MCF 10A (cell line): ENCODE measurements at regions of chr19 and their contacts with region 1.

Region 1: DNA sequence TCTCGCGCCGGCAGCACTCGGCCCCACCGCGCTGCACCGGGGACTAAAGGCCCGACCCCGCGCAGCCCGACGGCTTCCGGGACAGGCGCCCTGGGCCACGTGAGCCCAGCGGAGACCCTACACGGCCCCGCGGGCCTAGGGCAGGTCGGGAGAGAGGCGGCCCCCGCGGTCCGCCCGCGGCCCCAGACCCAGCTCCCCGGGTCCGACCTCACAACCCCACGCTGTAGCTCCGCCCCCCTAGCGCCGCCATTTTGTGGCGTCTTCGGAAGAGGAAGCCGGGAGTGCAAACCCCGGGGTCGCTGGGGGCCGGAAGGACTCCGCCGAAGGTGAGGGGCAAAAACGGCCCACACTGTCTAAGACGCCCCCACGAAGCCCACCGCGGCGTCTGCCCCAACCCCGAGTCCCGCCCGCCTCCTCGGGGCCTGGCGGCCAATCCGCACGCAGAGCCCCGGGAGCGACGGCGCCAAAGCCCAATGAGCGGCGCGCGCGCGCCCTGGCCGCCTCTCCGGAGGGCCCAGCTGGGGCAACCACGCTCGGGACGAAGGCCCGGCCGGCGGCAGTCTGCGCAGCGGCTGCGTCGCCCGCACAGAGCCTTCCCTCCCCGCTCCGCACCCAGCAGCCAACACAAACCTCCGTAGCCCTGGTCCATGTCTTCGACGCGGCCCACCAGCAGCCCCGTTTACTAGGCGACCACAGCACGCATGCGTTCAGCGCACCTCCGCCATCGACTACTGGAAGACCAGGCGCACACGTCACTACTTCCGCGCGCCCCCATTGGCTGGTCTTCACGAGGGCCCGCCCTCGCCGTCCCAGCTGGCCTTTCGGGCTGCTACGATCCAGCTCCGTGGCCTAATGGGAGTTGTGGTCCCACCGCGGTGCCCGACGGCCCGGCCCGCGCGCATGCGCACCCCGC is at the start of gene AKAP8:
- DNase-seq: peak; percentile 99
- H3K4me3 Mint-ChIP-seq: peak within 1 kb of the TSS; percentile 97
- H3K27ac Mint-ChIP-seq: peak within 1 kb of the TSS; percentile 94
- H3K4me1 Mint-ChIP-seq: peaks cover 21% of the 10 kb centered on the region
- H3K27me3 Mint-ChIP-seq: no peaks in the 10 kb centered on the region
- CTCF ChIP-seq: no peak
- total RNA-seq, gene AKAP8: 31.1 and 37.8 TPM in 2 replicates

Region 2: DNA sequence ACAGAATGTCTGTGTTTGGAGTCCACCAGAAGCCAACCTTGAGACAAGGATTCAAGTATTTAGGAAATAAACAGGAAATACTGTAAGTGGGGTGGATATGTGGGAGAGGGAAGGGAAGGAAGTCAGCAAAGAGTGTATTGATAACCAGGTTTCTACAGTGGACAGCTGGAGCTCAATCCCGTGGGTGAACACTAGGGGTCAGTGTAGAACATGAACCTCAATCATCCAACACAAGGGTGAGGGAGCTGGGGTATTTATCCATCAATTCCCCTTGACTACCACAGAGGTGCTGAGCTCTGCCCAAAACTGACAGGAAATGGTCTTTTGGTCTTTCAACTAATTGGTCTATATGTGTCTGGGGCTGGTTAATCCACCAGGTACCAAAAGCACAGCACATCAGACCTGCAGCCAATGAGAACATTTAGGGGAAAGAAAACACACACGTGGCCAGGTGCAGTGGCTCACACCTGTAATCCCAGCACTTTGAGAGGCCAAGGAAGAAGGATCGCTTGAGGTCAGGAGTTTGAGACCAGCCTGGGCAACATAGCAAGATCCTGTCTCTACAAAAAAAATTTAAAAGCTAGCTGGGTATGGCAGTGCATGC is 277.8 kb before region 1 on chr19:
- CTCF ChIA-PET with region 1: no interaction called
- POLR2A ChIA-PET with region 1: no interaction called
- intact Hi-C with region 1: no loop called
- DNase-seq: peak; percentile 45
- H3K4me3 Mint-ChIP-seq: no peak overlapping the region
- H3K27ac Mint-ChIP-seq: no peak overlapping the region
- H3K4me1 Mint-ChIP-seq: peaks cover 5% of the 10 kb centered on the region
- H3K27me3 Mint-ChIP-seq: no peaks in the 10 kb centered on the region
- CTCF ChIP-seq: peak; percentile 55

Region 3: DNA sequence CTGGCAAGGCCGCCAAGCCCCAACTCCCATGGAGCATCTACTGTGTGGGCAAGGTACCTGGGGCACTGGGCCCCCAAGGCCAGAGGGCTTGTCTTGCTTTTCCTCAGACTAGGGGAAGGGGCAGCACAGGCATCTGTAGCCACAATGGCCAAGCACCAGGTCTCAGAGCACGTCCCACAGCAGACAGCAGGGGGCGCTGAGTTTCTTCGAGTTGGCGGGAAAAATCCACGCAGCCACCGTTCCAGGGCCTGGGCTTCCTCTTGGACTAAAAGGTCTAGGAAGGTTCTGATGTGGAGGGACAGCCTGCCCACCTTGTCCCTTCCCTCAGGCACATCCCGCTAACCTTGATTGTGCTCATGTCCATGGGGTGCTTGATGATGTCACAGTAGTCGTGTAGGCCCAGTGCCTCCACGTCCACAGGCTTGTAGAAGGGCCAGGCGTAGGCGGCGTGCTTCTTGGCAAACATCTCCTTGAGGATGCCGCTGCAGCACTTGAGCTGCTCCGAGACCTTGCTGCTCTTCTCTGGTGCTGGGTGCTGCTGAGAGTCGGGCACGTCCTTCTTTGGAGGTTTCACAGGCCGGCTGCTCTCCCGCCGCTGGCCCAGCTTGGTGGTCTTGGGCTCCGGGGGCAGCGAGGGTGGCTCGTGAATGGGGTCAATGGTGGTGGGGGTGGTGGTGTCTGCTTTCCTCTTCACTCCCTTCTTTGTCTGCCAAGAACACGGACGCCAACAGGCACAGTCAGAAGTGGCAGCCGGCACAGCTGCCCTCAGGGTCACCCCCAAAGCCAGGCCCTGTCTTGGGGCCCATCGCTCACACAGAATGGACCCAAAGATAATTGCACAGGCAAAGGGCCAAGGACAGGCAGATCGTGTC is 115.0 kb before region 1 on chr19:
- CTCF ChIA-PET with region 1: interaction called, 3 read pairs
- POLR2A ChIA-PET with region 1: interaction called, 4 read pairs
- intact Hi-C with region 1: loop called (anchors 1 kb)
- DNase-seq: peak; percentile 73
- H3K4me3 Mint-ChIP-seq: no peak overlapping the region
- H3K27ac Mint-ChIP-seq: no peak overlapping the region
- H3K4me1 Mint-ChIP-seq: peaks cover 25% of the 10 kb centered on the region
- H3K27me3 Mint-ChIP-seq: no peaks in the 10 kb centered on the region
- CTCF ChIP-seq: peak; percentile 72

Region 4: DNA sequence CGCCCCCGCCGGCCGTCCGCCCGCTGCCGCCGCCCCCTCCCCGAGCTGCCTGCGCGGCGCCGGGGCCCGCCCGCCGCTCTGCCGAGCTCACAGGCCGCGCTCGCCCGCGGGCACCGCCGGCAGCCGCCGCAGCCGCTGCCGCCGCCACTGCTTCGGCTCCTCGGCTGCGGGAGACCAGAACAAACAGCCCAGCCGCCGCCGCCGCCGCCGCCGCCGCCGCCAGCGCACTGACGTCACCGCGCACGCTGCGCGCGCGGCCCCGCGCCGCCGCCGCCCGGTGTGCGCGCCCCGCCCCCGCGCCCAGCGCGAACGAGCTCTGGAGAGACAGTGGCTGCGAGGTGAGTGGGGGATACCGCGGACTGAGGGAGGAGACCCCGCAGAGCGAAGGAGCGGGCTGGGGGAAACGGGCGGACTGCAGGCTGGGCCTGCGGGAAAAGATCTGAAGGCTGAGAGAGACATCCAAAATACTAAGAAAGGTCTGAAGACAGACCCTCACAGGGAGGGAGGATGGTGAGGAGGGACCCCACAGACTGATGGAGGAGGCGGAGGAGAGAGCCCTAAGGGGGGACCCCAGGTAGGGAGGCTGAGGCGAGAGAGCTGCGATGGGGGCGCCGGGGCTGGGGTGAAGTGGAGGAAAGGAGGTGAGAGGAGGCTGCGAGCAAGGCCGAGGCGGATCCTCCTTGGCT is 46.9 kb before region 1 on chr19 and contains the start of gene BRD4:
- CTCF ChIA-PET with region 1: no interaction called
- POLR2A ChIA-PET with region 1: interaction called, 40 read pairs
- intact Hi-C with region 1: no loop called
- DNase-seq: peak; percentile 52
- H3K4me3 Mint-ChIP-seq: peak within 1 kb of the TSS; percentile 97
- H3K27ac Mint-ChIP-seq: peak within 1 kb of the TSS; percentile 91
- H3K4me1 Mint-ChIP-seq: peaks cover 9% of the 10 kb centered on the region
- H3K27me3 Mint-ChIP-seq: no peaks in the 10 kb centered on the region
- CTCF ChIP-seq: no peak
- total RNA-seq, gene BRD4: 167 and 189 TPM in 2 replicates

Region 5: GRCh38 chr19:15418588-15419412 is 39.5 kb after region 1 on chr19 and contains the start of gene AKAP8L:
- CTCF ChIA-PET with region 1: interaction called, 5 read pairs
- POLR2A ChIA-PET with region 1: interaction called, 108 read pairs
- intact Hi-C with region 1: loop called (anchors 2 kb)
- DNase-seq: peak; percentile 100
- H3K4me3 Mint-ChIP-seq: peak within 1 kb of the TSS; percentile 95
- H3K27ac Mint-ChIP-seq: peak within 1 kb of the TSS; percentile 97
- H3K4me1 Mint-ChIP-seq: peaks cover 19% of the 10 kb centered on the region
- H3K27me3 Mint-ChIP-seq: no peaks in the 10 kb centered on the region
- CTCF ChIP-seq: peak; percentile 43
- total RNA-seq, gene AKAP8L: 84.7 and 89.0 TPM in 2 replicates

Region 6: DNA sequence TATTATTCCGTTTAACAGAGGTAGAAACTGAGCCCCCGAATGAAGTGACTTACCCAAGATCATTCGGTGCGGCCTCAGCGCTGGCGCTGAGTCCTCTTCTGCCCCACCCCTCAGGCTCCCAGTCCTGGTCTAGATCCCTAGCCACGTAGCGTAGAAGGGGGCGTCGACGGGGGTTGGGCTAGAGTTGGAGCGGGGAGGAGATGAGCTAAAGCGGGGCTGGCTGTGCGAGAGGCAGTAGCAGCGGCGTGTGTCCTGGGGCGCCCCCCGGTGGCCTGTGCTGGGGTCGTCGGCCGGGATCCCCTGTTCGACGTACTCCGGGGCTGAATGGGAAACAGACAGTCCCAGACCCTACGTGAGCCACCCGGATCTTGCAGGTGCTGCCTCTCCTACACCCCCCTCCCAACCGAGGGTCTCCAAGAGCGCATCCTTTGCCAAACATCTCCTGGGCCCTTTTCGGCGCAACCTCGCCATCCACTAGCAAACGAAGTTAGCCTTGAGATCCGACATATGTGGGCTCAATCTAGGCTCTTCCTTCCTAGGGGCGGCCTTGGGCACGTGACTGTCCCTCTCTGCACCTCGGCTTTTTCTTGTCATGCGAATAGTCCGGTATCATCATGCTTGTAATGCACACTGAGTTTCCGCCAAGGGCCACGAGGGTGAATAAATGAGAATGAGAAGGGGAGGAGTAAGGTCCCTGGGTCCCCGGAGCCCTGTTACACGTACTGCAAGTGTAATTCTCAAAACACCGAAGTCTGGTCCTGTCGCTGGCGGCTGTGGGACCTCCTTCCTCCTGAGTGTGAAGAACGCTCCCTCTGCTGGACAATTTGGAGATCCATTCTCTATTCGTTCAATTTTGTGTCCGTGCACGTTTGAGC is 176.7 kb after region 1 on chr19:
- CTCF ChIA-PET with region 1: interaction called, 4 read pairs
- POLR2A ChIA-PET with region 1: no interaction called
- intact Hi-C with region 1: loop called (anchors 1 kb)
- DNase-seq: peak; percentile 90
- H3K4me3 Mint-ChIP-seq: peak overlapping the region; percentile 60
- H3K27ac Mint-ChIP-seq: no peak overlapping the region
- H3K4me1 Mint-ChIP-seq: peaks cover 11% of the 10 kb centered on the region
- H3K27me3 Mint-ChIP-seq: no peaks in the 10 kb centered on the region
- CTCF ChIP-seq: peak; percentile 81

Region 7: GRCh38 chr19:15570420-15570819 is 191.1 kb after region 1 on chr19:
- CTCF ChIA-PET with region 1: no interaction called
- POLR2A ChIA-PET with region 1: no interaction called
- intact Hi-C with region 1: no loop called
- DNase-seq: no peak
- H3K4me3 Mint-ChIP-seq: no peak overlapping the region
- H3K27ac Mint-ChIP-seq: no peak overlapping the region
- H3K4me1 Mint-ChIP-seq: no peaks in the 10 kb centered on the region
- H3K27me3 Mint-ChIP-seq: peaks cover 48% of the 10 kb centered on the region
- CTCF ChIP-seq: no peak